Panc1 (cell line): ENCODE measurements at regions of chr6 and their contacts with region 1.

Region 1: GRCh38 chr6:27312146-27312949 is at the start of gene POM121L2:
- DNase-seq: peak; percentile 76
- ATAC-seq: peak; percentile 88
- H3K4me3 ChIP-seq: peak within 1 kb of the TSS; percentile 67 to 70
- H3K27ac ChIP-seq: 0 out of 2 replicates have a peak within 1 kb of the TSS, but pooled peaks have one; percentile 8
- H3K4me1 ChIP-seq: peaks cover 3% of the 10 kb centered on the region; the same call in 1 of the 2 replicates
- H3K27me3 ChIP-seq: no peaks in the 10 kb centered on the region; the same call in 1 of the 2 replicates
- CTCF ChIP-seq: peak; percentile 92
- total RNA-seq, gene POM121L2: not detected

Region 2: GRCh38 chr6:27479319-27480182 is 167.2 kb after region 1 on chr6:
- CTCF ChIA-PET with region 1: no interaction called
- POLR2A ChIA-PET with region 1: no interaction called
- in situ Hi-C with region 1: no loop called
- intact Hi-C with region 1: loop called (anchors 5 kb)
- DNase-seq: peak; percentile 87
- ATAC-seq: peak; percentile 77
- H3K4me3 ChIP-seq: peak overlapping the region; percentile 98 to 100
- H3K27ac ChIP-seq: peak overlapping the region; percentile 93
- H3K4me1 ChIP-seq: peaks cover 9% of the 10 kb centered on the region
- H3K27me3 ChIP-seq: no peaks in the 10 kb centered on the region
- CTCF ChIP-seq: no peak

Region 3: GRCh38 chr6:27495386-27496135 is 183.2 kb after region 1 on chr6:
- CTCF ChIA-PET with region 1: no interaction called
- POLR2A ChIA-PET with region 1: no interaction called
- in situ Hi-C with region 1: no loop called
- intact Hi-C with region 1: loop called (anchors 5 kb)
- DNase-seq: peak; percentile 96
- ATAC-seq: peak; percentile 98
- H3K4me3 ChIP-seq: peak overlapping the region; percentile 74 to 94
- H3K27ac ChIP-seq: peak overlapping the region; percentile 59
- H3K4me1 ChIP-seq: no peaks in the 10 kb centered on the region; the same call in 1 of the 2 replicates
- H3K27me3 ChIP-seq: peaks cover 2% of the 10 kb centered on the region; the same call in 1 of the 2 replicates
- CTCF ChIP-seq: peak; percentile 60